Activated T-helper 2 cell treated with anti-CD3 and anti-CD28 coated beads, Interferon-gamma antibody, Interleukin-2, Interleukin-4, amounts not matched to agents 10 μg/mL and 5 μg/mL and 100 μg/mL, durations not matched to agents 14 hours and 24 hours and 36 hours (primary cell): ENCODE measurements at regions of chrX and their contacts with region 1.

Region 1: DNA sequence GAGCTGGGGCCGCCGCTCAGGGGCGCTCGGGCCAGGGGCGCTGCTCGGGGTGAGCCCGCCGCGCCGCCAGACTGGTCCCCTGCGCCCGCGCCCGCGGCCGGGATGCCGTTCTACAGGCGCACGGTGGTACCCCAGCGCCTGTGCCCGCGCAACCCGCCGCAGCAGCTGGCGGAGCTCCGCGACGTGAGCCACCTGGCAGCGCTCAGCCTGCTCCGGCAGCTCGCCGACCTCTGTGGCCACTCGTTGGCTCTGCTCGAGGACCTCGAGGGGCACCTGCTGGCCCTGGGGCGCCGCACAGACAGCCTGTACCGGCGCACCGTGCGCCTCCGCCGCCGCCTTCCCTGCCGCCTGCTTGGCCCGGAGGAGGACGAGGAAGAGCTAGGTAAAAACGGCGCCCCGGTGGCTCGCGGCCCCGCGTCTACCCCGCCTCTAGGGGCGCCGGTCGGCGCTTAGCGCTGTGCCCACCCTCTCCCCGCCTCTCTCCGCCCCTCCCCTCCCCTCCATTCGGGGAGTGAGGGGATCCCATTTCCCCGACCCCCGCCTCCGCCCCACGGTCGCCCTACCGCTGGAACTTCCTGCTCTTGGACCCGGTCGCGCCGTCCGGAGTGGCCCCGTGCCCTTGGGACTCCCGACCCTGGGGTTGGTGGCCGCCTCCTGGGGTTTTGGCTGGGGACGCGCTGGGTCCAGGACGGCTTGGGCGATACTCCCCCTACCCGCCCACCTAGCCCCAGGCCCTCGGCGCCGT is 513 bp downstream of the NHSL2 start:
- DNase-seq: peak; percentile 9
- H3K4me3 Mint-ChIP-seq: peak overlapping the region; percentile 13
- H3K27ac Mint-ChIP-seq: no peak overlapping the region
- H3K4me1 Mint-ChIP-seq: no peaks in the 10 kb centered on the region
- H3K27me3 Mint-ChIP-seq: peaks cover 51% of the 10 kb centered on the region

Region 2: DNA sequence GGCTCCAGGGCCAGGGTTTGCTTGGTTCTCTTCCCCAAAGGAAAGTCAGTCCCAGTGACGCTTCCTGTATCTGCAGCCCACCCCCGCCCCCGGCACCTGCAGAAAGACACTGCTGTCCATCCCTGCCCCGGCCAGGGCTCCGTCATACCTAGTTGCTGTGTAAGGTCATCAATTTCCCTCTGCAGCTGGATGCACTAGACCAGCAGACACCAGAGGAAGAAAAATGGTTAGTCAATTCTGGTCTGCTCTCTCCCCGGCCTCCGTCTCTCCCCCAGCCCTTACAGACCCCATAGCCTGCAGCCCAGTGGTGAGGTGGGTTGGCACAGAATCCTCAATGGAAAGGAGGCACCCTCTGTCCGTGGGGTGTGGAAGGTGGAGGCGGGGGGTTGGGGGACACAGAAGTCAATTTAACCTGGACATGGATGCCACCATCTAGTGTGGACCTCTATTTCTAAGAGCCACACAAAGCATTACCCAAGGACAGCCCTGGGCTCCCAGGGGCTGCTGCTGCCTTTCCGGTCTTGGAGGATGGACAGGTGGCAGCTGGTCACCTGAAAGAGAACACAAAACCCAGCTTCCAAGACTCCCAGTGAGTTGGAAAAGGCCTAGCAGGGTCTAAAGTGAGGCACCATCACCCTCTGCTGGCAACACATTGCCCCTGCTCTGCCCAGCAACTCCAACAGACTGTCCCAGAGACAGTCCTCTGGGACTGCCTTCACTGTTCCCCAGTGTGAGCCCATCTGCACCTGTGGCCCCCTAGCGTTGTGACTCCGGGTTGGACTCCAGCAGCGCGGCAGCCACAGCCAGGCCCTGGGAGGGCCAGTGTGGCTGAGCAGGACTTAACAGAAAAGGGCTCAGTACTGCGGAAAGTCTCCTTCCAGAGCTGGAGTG is 40.7 kb before region 1 on chrX:
- intact Hi-C with region 1: loop called (anchors 5 kb)
- DNase-seq: no peak
- H3K4me3 Mint-ChIP-seq: no peak overlapping the region
- H3K27ac Mint-ChIP-seq: no peak overlapping the region
- H3K4me1 Mint-ChIP-seq: peaks cover 4% of the 10 kb centered on the region
- H3K27me3 Mint-ChIP-seq: peaks cover 4% of the 10 kb centered on the region